PC-9 (cell line): ENCODE measurements at regions of chr6 and their contacts with region 1.

Region 1: GRCh38 chr6:149815788-149816187 is 48.4 kb downstream of the LRP11 start:
- DNase-seq: no peak
- H3K4me3 ChIP-seq: no peak overlapping the region
- H3K27ac ChIP-seq: no peak overlapping the region
- H3K4me1 ChIP-seq: no peaks in the 10 kb centered on the region
- H3K27me3 ChIP-seq: no peaks in the 10 kb centered on the region
- CTCF ChIP-seq: no peak

Region 2: GRCh38 chr6:150156460-150156859 is 340.7 kb after region 1 on chr6:
- CTCF ChIA-PET with region 1: no interaction called
- POLR2A ChIA-PET with region 1: interaction called, 11 read pairs
- intact Hi-C with region 1: no loop called
- DNase-seq: no peak
- H3K4me3 ChIP-seq: no peak overlapping the region
- H3K27ac ChIP-seq: no peak overlapping the region
- H3K4me1 ChIP-seq: no peaks in the 10 kb centered on the region; the same call in 1 of the 2 replicates
- H3K27me3 ChIP-seq: no peaks in the 10 kb centered on the region
- CTCF ChIP-seq: no peak

Region 3: DNA sequence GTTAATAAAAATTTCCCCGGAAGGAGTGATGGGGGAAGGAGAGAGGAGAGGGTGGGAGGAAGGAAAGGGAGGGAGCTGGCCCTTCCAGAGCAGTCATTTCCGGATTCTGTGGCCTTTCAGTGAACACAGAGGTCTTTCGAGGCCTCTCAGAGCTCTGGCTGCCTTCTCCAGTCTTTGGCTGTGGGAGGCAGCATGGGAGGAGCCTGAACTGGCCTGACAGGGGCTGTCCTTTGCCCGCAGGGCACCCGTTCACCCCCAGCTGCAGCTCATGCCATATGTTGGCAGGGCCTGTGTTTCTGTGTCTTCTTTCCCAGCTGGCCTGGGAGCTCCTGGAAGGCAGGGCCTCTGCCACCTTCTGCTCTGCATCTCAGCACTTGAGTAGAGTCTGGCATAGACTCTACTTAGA is 422.6 kb after region 1 on chr6:
- CTCF ChIA-PET with region 1: no interaction called
- POLR2A ChIA-PET with region 1: no interaction called
- intact Hi-C with region 1: no loop called
- DNase-seq: no peak
- H3K4me3 ChIP-seq: no peak overlapping the region
- H3K27ac ChIP-seq: no peak overlapping the region
- H3K4me1 ChIP-seq: no peaks in the 10 kb centered on the region
- H3K27me3 ChIP-seq: no peaks in the 10 kb centered on the region
- CTCF ChIP-seq: no peak